CD4-positive, alpha-beta T cell (primary cell): ENCODE measurements at regions of chrX and their contacts with region 1.

Region 1: GRCh38 chrX:44253575-44253942 is 89.9 kb downstream of the EFHC2 start:
- DNase-seq: no peak
- ATAC-seq: no peak
- H3K4me3 ChIP-seq: peak overlapping the region; percentile 19
- H3K4me3 Mint-ChIP-seq: peak overlapping the region; percentile 81
- H3K27ac ChIP-seq: peak overlapping the region; percentile 62
- H3K27ac Mint-ChIP-seq: peak overlapping the region; percentile 92
- H3K4me1 ChIP-seq: peaks cover 15% of the 10 kb centered on the region
- H3K4me1 Mint-ChIP-seq: peaks cover 38% of the 10 kb centered on the region
- H3K27me3 ChIP-seq: no peaks in the 10 kb centered on the region
- H3K27me3 Mint-ChIP-seq: no peaks in the 10 kb centered on the region
- CTCF ChIP-seq: no peak

Region 2: DNA sequence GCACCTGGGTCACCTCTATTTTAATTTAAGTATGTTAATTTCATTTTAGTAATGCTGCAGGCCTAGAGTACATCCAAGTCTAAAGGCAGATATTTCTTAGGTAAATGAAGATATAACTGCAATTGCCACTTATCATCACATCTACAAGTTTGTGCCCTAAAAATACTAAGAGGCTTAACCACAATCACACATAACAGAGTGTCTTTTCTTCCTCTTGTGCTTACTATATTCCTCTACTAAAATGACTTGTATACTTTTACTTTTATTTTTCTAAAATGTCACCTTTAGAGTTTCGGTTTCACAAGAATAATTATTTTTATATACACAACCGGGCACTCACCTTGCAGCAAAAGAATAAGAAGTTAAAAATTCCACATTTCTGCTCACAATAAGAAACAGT is 12.0 kb after region 1 on chrX:
- CTCF ChIA-PET with region 1: no interaction called
- POLR2A ChIA-PET with region 1: interaction called, 32 read pairs
- intact Hi-C with region 1: no loop called
- DNase-seq: peak in 2 of 14 experiments; percentile 4 to 51
- ATAC-seq: peak; percentile 49
- H3K4me3 ChIP-seq: no peak overlapping the region
- H3K4me3 Mint-ChIP-seq: peak overlapping the region; percentile 74
- H3K27ac ChIP-seq: no peak overlapping the region
- H3K27ac Mint-ChIP-seq: peak overlapping the region; percentile 68
- H3K4me1 ChIP-seq: peaks cover 15% of the 10 kb centered on the region
- H3K4me1 Mint-ChIP-seq: peaks cover 38% of the 10 kb centered on the region
- H3K27me3 ChIP-seq: no peaks in the 10 kb centered on the region
- H3K27me3 Mint-ChIP-seq: no peaks in the 10 kb centered on the region
- CTCF ChIP-seq: no peak

Region 3: GRCh38 chrX:44462850-44463249 is 209.3 kb after region 1 on chrX:
- CTCF ChIA-PET with region 1: no interaction called
- POLR2A ChIA-PET with region 1: no interaction called
- intact Hi-C with region 1: no loop called
- DNase-seq: peak in 1 of 14 experiments; percentile 0
- ATAC-seq: no peak
- H3K4me3 ChIP-seq: no peak overlapping the region
- H3K4me3 Mint-ChIP-seq: no peak overlapping the region
- H3K27ac ChIP-seq: no peak overlapping the region
- H3K27ac Mint-ChIP-seq: no peak overlapping the region
- H3K4me1 ChIP-seq: no peaks in the 10 kb centered on the region
- H3K4me1 Mint-ChIP-seq: no peaks in the 10 kb centered on the region
- H3K27me3 ChIP-seq: peaks cover 0 to 3% of the 10 kb centered on the region in 2 experiments
- H3K27me3 Mint-ChIP-seq: no peaks in the 10 kb centered on the region
- CTCF ChIP-seq: no peak